ENCODE measurements at regions of chr13 and their contacts with region 1.

Region 1: GRCh38 chr13:59391696-59392095 is 772.0 kb downstream of the DIAPH3 start:
- DNase-seq: no peak
- H3K4me3 ChIP-seq: no peak overlapping the region
- H3K27ac ChIP-seq: no peak overlapping the region
- H3K4me1 ChIP-seq: no peaks in the 10 kb centered on the region
- H3K27me3 ChIP-seq: no peaks in the 10 kb centered on the region
- CTCF ChIP-seq: peak in 3 of 4 experiments; percentile 56 to 81 (median 57)
- EP300 ChIP-seq: no peak
- POLR2A ChIP-seq: no peak

Region 2: DNA sequence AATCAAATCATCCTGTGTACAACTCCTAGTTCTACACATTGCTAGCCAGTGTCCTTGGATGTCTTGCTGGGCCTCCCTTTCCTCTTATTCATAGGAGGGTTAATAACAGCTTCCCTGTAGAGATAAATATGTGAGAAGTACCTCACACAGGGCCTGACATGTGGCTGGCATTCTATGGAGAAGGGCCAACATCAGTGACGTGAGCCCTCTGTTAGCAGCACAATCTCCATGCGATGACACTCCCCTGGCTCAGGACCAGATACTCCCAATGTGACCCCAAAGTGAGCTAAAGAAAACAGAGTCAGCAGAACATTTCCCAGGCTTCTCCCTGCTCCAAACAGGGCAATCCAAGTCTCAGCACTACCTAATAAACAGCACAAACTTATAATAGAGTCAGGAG is 46.4 kb before region 1 on chr13:
- intact Hi-C with region 1: no loop called
- DNase-seq: peak; percentile 86
- H3K4me3 ChIP-seq: no peak overlapping the region
- H3K27ac ChIP-seq: peak overlapping the region in 2 of 4 donors; percentile 52 to 67
- H3K4me1 ChIP-seq: peaks cover 0 to 38% (median 26%) of the 10 kb centered on the region in 4 donors
- H3K27me3 ChIP-seq: no peaks in the 10 kb centered on the region
- CTCF ChIP-seq: no peak
- EP300 ChIP-seq: peak in 1 of 4 donors; percentile 32
- POLR2A ChIP-seq: no peak

Region 3: GRCh38 chr13:59677966-59678814 is 286.5 kb after region 1 on chr13:
- intact Hi-C with region 1: loop called (anchors 5 kb)
- DNase-seq: no peak
- H3K4me3 ChIP-seq: no peak overlapping the region
- H3K27ac ChIP-seq: no peak overlapping the region
- H3K4me1 ChIP-seq: no peaks in the 10 kb centered on the region
- H3K27me3 ChIP-seq: no peaks in the 10 kb centered on the region
- CTCF ChIP-seq: peak; percentile 15 to 73 (median 50)
- EP300 ChIP-seq: no peak
- POLR2A ChIP-seq: no peak

Region 4: GRCh38 chr13:59771272-59771671 is 379.6 kb after region 1 on chr13:
- intact Hi-C with region 1: loop called (anchors 10 kb)
- DNase-seq: no peak
- H3K4me3 ChIP-seq: no peak overlapping the region
- H3K27ac ChIP-seq: no peak overlapping the region
- H3K4me1 ChIP-seq: peaks cover 0 to 10% (median 2%) of the 10 kb centered on the region in 4 donors
- H3K27me3 ChIP-seq: no peaks in the 10 kb centered on the region
- CTCF ChIP-seq: peak in 1 of 4 experiments; percentile 31
- EP300 ChIP-seq: no peak
- POLR2A ChIP-seq: no peak

Region 5: GRCh38 chr13:59906413-59907049 is 514.8 kb after region 1 on chr13:
- intact Hi-C with region 1: loop called (anchors 5 kb)
- DNase-seq: no peak
- H3K4me3 ChIP-seq: no peak overlapping the region
- H3K27ac ChIP-seq: no peak overlapping the region
- H3K4me1 ChIP-seq: no peaks in the 10 kb centered on the region
- H3K27me3 ChIP-seq: no peaks in the 10 kb centered on the region
- CTCF ChIP-seq: peak in 1 of 4 experiments; percentile 31
- EP300 ChIP-seq: no peak
- POLR2A ChIP-seq: no peak

Measured in sigmoid colon (tissue), 7 donors.